Spleen (tissue), 13 donors: ENCODE measurements at regions of chr4 and their contacts with region 1.

Region 1: DNA sequence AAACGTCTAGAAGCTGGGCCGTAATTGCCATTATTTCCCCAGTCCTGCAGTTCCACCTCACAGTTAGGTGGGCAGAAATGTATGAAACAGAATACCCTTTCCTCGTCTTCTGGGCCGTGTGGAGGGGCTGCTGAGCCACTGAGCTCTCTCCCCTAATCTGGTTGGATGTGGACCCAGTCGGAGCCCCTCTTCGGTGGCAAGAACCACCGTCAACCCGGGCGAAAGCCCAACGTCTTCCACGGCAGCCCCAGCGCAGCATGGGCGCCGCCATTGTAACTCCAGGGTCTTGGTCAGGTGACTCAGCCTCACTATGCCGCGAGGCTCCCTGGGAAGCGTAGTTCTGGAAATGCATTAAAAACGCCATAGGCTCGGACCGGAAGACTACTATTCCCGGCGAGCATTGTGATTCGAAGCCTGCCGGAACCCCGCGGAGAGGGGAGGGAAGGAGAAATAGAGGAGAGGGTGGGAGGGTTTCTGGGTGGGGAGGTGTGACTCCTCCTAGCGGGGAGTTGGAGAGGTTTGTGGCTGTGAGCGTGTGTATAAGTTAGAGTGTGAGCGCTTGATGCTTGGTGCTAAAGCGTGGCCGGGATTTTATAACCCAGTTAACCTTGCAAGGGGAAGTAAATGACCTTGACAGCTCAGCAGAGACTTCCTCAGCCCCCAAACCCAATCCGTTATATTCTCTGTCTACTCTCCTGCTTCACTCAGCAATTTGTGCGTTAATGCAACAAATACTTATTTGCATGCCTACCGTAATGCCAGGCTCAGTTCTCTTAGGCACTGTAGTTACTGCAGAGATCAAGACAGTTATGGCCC is at the start of gene GATB:
- DNase-seq: peak; percentile 96
- H3K4me3 ChIP-seq: peak within 1 kb of the TSS; percentile 73 to 82 (median 78)
- H3K27ac ChIP-seq: peak within 1 kb of the TSS; percentile 47 to 82 (median 72)
- H3K4me1 ChIP-seq: peaks cover 8 to 18% (median 14%) of the 10 kb centered on the region in 6 donors
- H3K27me3 ChIP-seq: peaks cover 0 to 8% (median 0%) of the 10 kb centered on the region in 7 donors
- CTCF ChIP-seq: peak; percentile 35 to 80 (median 69)
- POLR2A ChIP-seq: no peak
- total RNA-seq, gene GATB: 12.6 to 22.7 (median 15.6) TPM

Region 2: GRCh38 chr4:152369902-152370295 is 609.0 kb after region 1 on chr4:
- intact Hi-C with region 1: loop called (anchors 10 kb)
- DNase-seq: no peak
- H3K4me3 ChIP-seq: no peak overlapping the region
- H3K27ac ChIP-seq: no peak overlapping the region
- H3K4me1 ChIP-seq: peaks cover 0 to 13% (median 0%) of the 10 kb centered on the region in 6 donors
- H3K27me3 ChIP-seq: no peaks in the 10 kb centered on the region
- CTCF ChIP-seq: peak in 6 of 11 experiments; percentile 13 to 35 (median 19)
- POLR2A ChIP-seq: no peak

Region 3: GRCh38 chr4:152784490-152785350 is 1023.8 kb after region 1 on chr4:
- intact Hi-C with region 1: no loop called
- DNase-seq: no peak
- H3K4me3 ChIP-seq: no peak overlapping the region
- H3K27ac ChIP-seq: peak overlapping the region in 1 of 8 donors; percentile 13
- H3K4me1 ChIP-seq: peaks cover 14 to 70% (median 45%) of the 10 kb centered on the region in 6 donors
- H3K27me3 ChIP-seq: no peaks in the 10 kb centered on the region
- CTCF ChIP-seq: no peak
- POLR2A ChIP-seq: no peak